GM10248 (cell line): ENCODE measurements at regions of chr17 and their contacts with region 1.

Region 1: DNA sequence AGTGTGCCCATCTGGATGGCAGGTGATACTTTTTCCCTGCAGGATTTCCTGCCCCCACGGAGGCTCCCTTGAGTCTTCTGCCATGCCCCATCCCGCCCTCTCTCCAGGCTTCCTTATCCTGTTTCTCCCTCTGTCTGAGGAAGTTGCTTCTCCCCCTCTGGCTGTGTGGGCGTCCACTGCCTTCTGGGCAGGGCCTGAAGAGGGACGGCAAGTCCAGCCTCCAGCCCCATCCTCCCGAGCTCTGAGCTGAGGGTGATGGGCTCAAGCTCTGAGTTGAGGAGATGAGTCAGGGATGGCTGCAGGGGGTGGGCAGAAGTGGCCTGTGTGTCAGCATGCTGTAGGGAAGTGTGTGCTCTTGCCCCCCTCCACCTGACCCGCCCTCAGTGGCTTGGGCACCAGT is 14.2 kb upstream of the RAP1GAP2 start:
- DNase-seq: no peak
- CTCF ChIP-seq: no peak

Region 2: GRCh38 chr17:2594722-2595599 is 187.1 kb before region 1 on chr17:
- CTCF ChIA-PET with region 1: no interaction called
- POLR2A ChIA-PET with region 1: interaction called, 14 read pairs
- DNase-seq: no peak
- CTCF ChIP-seq: no peak